ENCODE measurements at regions of chr1 and their contacts with region 1.

Region 1: GRCh38 chr1:168106274-168106673 is 30.5 kb downstream of the GPR161 start:
- DNase-seq: no peak
- ATAC-seq: no peak
- H3K4me3 ChIP-seq: no peak overlapping the region
- H3K27ac ChIP-seq: no peak overlapping the region
- H3K4me1 ChIP-seq: peaks cover 4% of the 10 kb centered on the region in 2 experiments; a peak in 2 of 5 replicates
- H3K27me3 ChIP-seq: no peaks in the 10 kb centered on the region; a peak in 1 of 5 replicates
- CTCF ChIP-seq: no peak
- EP300 ChIP-seq: no peak
- POLR2A ChIP-seq: no peak
- RAD21 ChIP-seq: no peak

Region 2: DNA sequence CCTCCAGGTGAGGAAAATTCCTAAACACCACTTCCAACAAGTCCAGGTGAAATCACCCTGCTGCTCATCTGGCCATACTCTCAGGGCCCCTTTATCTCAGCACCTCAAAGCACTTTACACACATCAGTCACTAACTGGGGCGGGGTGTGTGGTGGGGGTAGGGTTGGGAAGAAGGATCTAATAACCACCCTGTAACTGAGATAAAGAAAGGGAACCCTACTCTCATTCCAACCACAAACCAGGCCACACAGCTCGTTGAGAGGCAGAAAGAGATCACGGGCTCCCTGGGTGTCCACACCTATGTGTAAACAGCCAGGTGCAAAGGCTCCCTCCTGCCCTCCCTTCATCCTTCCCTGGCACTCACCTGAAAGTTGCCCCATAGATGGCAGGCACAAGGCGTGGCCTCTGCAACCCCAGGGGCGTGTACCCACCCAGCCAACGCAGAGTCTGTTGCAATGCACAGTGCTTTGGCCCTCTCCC is 10.1 kb after region 1 on chr1:
- CTCF ChIA-PET with region 1: no interaction called
- POLR2A ChIA-PET with region 1: interaction called, 20 read pairs
- in situ Hi-C with region 1: no loop called
- intact Hi-C with region 1: no loop called
- DNase-seq: no peak
- ATAC-seq: peak; percentile 44
- H3K4me3 ChIP-seq: no peak overlapping the region
- H3K27ac ChIP-seq: no peak overlapping the region
- H3K4me1 ChIP-seq: no peaks in the 10 kb centered on the region; a peak in 3 of 5 replicates
- H3K27me3 ChIP-seq: no peaks in the 10 kb centered on the region
- CTCF ChIP-seq: no peak
- EP300 ChIP-seq: no peak
- POLR2A ChIP-seq: no peak
- RAD21 ChIP-seq: no peak

Measured in K562 (cell line).